ENCODE measurements at regions of chr15 and their contacts with region 1.

Region 1: DNA sequence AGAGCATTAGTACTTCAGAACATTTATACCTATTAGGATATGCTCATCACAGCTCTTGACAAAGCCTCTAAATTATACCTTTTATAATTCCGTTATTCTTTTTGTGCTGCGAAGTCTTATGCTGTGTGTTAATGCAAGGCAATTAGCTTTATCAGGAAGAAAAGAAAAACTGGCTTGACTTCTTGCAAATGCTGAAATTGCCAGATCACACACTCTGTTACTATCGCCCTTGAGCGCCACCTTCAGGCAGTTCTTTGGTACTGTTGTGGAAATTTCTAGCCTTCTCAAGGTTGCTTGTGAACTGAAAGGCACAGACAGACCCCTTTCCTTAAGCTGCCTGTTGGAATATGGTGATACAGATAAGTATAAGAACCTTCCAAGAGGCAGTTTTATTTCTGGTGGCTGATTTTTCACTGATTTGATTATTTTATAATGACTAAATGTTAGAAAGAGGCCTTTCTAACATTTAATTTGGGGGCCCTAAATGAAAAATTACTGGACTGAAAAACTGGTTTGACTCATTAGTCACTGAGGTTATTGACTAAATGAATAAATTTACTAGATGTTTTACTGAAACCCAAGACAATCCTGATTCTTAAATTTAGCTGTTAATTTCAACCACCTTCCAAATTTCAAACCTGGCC is 126.2 kb upstream of the RASGRP1 start:
- DNase-seq: peak; percentile 91
- ATAC-seq: peak; percentile 28
- H3K4me3 Mint-ChIP-seq: no peak overlapping the region
- H3K27ac Mint-ChIP-seq: no peak overlapping the region
- H3K4me1 Mint-ChIP-seq: peaks cover 82% of the 10 kb centered on the region
- H3K27me3 Mint-ChIP-seq: no peaks in the 10 kb centered on the region

Region 2: GRCh38 chr15:38474155-38474757 is 216.6 kb before region 1 on chr15:
- CTCF ChIA-PET with region 1: interaction called, 130 read pairs
- POLR2A ChIA-PET with region 1: interaction called, 5 read pairs
- DNase-seq: peak; percentile 58
- ATAC-seq: peak; percentile 95
- H3K4me3 Mint-ChIP-seq: no peak overlapping the region
- H3K27ac Mint-ChIP-seq: peak overlapping the region; percentile 7
- H3K4me1 Mint-ChIP-seq: peaks cover 2% of the 10 kb centered on the region
- H3K27me3 Mint-ChIP-seq: no peaks in the 10 kb centered on the region

Region 3: GRCh38 chr15:38496151-38496550 is 194.7 kb before region 1 on chr15:
- CTCF ChIA-PET with region 1: interaction called, 81 read pairs
- POLR2A ChIA-PET with region 1: interaction called, 4 read pairs
- DNase-seq: no peak
- ATAC-seq: no peak
- H3K4me3 Mint-ChIP-seq: no peak overlapping the region
- H3K27ac Mint-ChIP-seq: peak overlapping the region; percentile 18
- H3K4me1 Mint-ChIP-seq: peaks cover 5% of the 10 kb centered on the region
- H3K27me3 Mint-ChIP-seq: no peaks in the 10 kb centered on the region

Region 4: DNA sequence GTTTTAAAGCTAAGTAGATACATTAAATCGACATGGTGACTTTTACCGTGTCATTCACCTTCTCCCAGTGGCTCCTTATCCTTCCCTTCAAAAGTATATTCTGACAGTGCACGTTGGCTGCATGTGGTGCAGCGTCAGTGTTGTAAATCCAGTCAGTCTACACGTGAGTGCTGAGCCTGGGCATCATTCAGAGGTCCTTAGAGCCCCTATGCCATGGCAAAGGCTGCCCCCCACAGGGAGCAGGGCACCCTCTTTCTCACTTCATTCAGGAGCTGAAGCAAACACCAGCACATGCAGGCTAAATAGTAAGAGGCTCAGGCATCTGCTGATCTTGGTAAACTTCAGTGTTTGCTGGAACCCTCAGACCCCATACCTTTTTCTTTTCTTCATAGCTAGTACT is 169.5 kb before region 1 on chr15:
- CTCF ChIA-PET with region 1: interaction called, 29 read pairs
- POLR2A ChIA-PET with region 1: no interaction called
- DNase-seq: no peak
- ATAC-seq: no peak
- H3K4me3 Mint-ChIP-seq: no peak overlapping the region
- H3K27ac Mint-ChIP-seq: peak overlapping the region; percentile 51
- H3K4me1 Mint-ChIP-seq: peaks cover 23% of the 10 kb centered on the region
- H3K27me3 Mint-ChIP-seq: no peaks in the 10 kb centered on the region

Region 5: GRCh38 chr15:38610748-38611147 is 80.1 kb before region 1 on chr15:
- CTCF ChIA-PET with region 1: interaction called, 38 read pairs
- POLR2A ChIA-PET with region 1: interaction called, 11 read pairs
- DNase-seq: peak; percentile 68
- ATAC-seq: peak; percentile 60
- H3K4me3 Mint-ChIP-seq: peak overlapping the region; percentile 71
- H3K27ac Mint-ChIP-seq: peak overlapping the region; percentile 98
- H3K4me1 Mint-ChIP-seq: peaks cover 73% of the 10 kb centered on the region
- H3K27me3 Mint-ChIP-seq: no peaks in the 10 kb centered on the region

Region 6: DNA sequence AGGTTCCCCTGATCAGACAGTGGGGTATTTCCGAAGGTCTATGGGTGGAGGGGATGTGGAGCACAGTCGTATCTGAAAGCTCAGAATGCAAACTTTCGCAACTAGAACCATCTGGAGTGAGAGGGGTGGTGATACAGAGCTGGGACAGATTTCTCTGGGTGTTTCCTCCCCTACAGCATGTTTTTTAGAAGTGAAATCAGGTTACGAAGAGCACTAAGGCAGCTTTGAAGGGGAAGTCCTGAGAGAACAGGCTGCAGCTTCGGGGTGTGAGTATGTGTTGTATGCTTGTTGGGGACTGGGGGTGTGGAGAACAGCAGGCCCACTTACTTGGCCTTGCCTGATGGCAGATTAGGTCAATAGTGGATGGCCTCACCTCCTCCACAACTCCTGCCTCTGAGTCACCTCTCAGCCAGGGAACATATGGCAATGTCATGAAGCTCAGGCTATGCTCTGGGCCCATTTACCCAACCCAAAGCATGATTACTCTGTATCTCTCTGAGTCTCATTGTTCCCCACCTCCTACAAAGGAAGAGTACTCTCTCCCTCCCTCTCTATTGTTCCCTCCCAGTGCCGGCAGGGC is 19.0 kb before region 1 on chr15:
- CTCF ChIA-PET with region 1: interaction called, 803 read pairs
- POLR2A ChIA-PET with region 1: interaction called, 81 read pairs
- DNase-seq: peak; percentile 44
- ATAC-seq: peak; percentile 34
- H3K4me3 Mint-ChIP-seq: peak overlapping the region; percentile 44
- H3K27ac Mint-ChIP-seq: peak overlapping the region; percentile 91
- H3K4me1 Mint-ChIP-seq: peaks cover 84% of the 10 kb centered on the region
- H3K27me3 Mint-ChIP-seq: no peaks in the 10 kb centered on the region

Region 7: DNA sequence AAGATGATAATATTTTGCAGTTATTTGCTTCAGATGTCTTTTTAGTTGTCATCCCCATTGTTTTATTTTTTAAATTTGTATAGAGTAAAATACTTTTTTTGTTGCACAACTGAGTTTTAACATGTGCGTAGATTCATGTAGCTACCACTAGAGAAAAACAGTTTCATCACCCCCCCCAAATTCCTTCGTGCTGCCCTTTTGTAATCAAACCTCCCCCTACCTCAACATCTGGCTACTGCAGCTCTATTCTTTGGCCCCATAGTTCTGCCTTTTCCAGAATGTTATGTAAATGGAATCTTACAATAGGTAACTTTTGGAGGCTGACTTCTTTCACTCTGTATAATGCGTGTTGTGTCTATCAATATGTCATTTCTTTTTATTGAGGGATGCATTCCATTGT is 105.8 kb after region 1 on chr15:
- CTCF ChIA-PET with region 1: no interaction called
- POLR2A ChIA-PET with region 1: no interaction called
- DNase-seq: no peak
- ATAC-seq: no peak
- H3K4me3 Mint-ChIP-seq: no peak overlapping the region
- H3K27ac Mint-ChIP-seq: no peak overlapping the region
- H3K4me1 Mint-ChIP-seq: no peaks in the 10 kb centered on the region
- H3K27me3 Mint-ChIP-seq: peaks cover 35% of the 10 kb centered on the region